ENCODE measurements at regions of chr3 and their contacts with region 1.

Region 1: GRCh38 chr3:66483406-66483906 is 17.4 kb downstream of the LRIG1 start:
- DNase-seq: no peak
- H3K4me3 Mint-ChIP-seq: no peak overlapping the region
- H3K27ac Mint-ChIP-seq: peak overlapping the region; percentile 46
- H3K4me1 Mint-ChIP-seq: peaks cover 82% of the 10 kb centered on the region
- H3K27me3 Mint-ChIP-seq: no peaks in the 10 kb centered on the region

Region 2: DNA sequence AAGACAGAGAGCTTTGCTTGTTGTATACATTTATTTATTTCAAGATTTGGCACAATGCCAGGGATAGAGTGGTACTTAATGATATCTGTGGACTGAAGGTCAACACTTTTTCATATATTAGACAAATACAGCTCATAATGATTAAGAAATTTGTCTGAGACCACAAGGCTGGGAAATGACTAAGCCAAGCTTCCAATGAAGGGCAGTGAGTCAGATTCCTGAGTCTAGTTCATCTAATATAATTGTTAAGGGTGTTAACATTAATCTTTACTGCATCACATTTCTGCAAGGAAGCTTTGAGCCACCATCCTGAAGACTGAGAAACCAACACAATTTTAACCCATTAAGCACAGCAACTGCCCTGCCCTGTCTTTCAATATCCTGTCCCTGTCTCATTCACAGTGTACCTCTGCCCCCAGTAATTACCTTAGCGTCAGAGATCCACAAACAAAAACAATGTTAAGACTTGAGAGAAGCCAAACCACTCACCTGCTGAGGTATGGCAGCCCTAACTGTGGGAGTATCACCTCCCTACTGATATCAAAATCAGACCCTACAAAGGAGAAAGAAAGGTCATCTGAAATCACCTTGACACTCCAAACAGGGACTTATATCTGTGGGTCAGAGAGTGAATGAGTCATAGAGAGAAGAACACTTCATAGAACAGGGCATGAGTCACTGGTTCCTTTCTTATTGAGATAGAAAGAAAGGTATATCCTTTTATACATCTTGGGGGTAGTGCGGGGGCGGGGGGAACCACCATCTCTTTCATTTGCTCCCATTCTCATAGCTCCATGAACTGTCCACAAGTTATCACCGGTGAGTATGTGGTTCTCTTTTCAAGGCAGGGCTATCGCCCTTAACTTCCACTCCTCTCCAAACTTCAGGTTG is 519.4 kb before region 1 on chr3:
- intact Hi-C with region 1: loop called (anchors 5 kb)
- DNase-seq: no peak
- H3K4me3 Mint-ChIP-seq: peak overlapping the region; percentile 32
- H3K27ac Mint-ChIP-seq: peak overlapping the region; percentile 96
- H3K4me1 Mint-ChIP-seq: peaks cover 33% of the 10 kb centered on the region
- H3K27me3 Mint-ChIP-seq: no peaks in the 10 kb centered on the region

Region 3: GRCh38 chr3:66038726-66039589 is 444.5 kb before region 1 on chr3 and contains the start of gene MAGI1:
- intact Hi-C with region 1: loop called (anchors 5 kb)
- DNase-seq: peak; percentile 46
- H3K4me3 Mint-ChIP-seq: peak within 1 kb of the TSS; percentile 92
- H3K27ac Mint-ChIP-seq: peak within 1 kb of the TSS; percentile 89
- H3K4me1 Mint-ChIP-seq: peaks cover 10% of the 10 kb centered on the region
- H3K27me3 Mint-ChIP-seq: peaks cover 59% of the 10 kb centered on the region
- total RNA-seq, gene MAGI1: 10.8 and 11.0 TPM in 2 replicates

Region 4: GRCh38 chr3:66220602-66221377 is 262.7 kb before region 1 on chr3 and contains the start of gene SLC25A26:
- intact Hi-C with region 1: loop called (anchors 5 kb)
- DNase-seq: peak; percentile 96
- H3K4me3 Mint-ChIP-seq: peak within 1 kb of the TSS; percentile 93
- H3K27ac Mint-ChIP-seq: peak within 1 kb of the TSS; percentile 93
- H3K4me1 Mint-ChIP-seq: peaks cover 28% of the 10 kb centered on the region
- H3K27me3 Mint-ChIP-seq: no peaks in the 10 kb centered on the region
- total RNA-seq, gene SLC25A26: 15.5 and 16.9 TPM in 2 replicates

Region 5: GRCh38 chr3:66472313-66473134 is 10.9 kb before region 1 on chr3:
- intact Hi-C with region 1: loop called (anchors 1 kb)
- DNase-seq: peak; percentile 41
- H3K4me3 Mint-ChIP-seq: peak overlapping the region; percentile 67
- H3K27ac Mint-ChIP-seq: no peak overlapping the region
- H3K4me1 Mint-ChIP-seq: peaks cover 66% of the 10 kb centered on the region
- H3K27me3 Mint-ChIP-seq: no peaks in the 10 kb centered on the region

Region 6: DNA sequence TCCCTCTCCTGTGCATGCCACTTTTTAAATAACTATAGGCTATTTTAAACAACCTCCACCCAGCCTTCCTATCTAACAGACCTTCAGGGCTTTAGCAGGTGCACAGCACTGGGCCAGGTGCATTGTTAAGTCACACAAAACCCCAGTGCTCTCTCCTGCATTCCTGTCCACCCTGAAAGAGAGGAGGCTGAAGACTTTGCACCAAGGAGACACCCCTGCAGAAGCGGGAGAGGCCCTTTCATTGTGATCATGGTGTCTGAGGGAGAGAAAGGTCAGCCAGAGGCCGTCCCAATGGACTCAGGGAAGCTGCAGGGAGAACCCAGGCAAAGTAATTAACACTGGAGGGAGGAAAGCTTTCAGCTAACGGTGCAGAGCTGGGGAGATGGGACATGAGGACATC is 12.2 kb after region 1 on chr3:
- intact Hi-C with region 1: loop called (anchors 1 kb)
- DNase-seq: no peak
- H3K4me3 Mint-ChIP-seq: peak overlapping the region; percentile 55
- H3K27ac Mint-ChIP-seq: peak overlapping the region; percentile 77
- H3K4me1 Mint-ChIP-seq: peaks cover 80% of the 10 kb centered on the region
- H3K27me3 Mint-ChIP-seq: no peaks in the 10 kb centered on the region

Region 7: DNA sequence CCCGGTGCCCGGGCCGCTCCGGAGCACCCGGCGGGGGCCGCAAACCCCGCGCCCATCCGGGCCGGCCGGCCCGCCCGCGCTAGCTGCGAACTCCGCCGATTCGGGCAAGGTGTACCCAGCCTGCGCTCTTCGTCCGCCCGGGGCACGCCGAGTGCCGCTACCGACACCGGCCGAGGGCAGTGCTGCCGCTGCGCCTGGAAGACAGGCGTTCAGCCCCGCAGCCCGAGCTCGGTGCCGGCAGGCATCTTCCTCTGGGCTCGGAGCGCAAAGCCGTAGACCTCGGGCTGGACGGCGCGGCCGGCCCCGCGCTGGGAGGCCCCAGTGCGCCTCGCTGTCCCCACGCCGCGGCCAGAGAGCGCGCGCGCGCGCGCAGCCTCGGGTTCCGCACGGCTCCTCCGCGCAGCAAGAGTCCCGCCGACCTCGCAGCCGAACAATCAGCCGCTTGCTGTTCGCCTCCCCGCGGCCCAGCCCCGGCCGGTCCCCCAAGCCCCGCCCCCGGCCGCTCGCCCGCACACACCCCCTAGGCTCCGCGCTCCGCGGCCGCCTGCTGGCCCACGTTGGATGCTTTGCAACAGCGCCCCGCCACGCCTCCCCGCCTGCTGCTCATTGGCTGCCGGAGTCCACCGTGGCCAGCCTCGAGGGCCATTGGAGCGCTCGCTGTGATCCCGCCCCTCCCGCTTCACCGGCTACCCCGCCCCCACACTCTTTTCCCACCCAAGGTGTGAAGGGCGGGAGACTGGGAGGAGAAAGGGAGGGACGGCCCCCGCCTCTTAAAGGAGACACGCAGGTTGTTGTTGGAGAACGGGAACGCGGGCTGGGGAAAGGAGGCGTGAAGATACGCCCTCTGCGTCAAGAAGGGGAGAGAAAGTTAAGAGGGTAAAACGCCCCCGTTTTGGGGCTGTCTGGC is 17.4 kb after region 1 on chr3 and contains the start of gene LRIG1:
- intact Hi-C with region 1: loop called (anchors 1 kb)
- DNase-seq: peak; percentile 98
- H3K4me3 Mint-ChIP-seq: peak within 1 kb of the TSS; percentile 96
- H3K27ac Mint-ChIP-seq: peak within 1 kb of the TSS; percentile 84
- H3K4me1 Mint-ChIP-seq: peaks cover 59% of the 10 kb centered on the region
- H3K27me3 Mint-ChIP-seq: peaks cover 27% of the 10 kb centered on the region
- total RNA-seq, gene LRIG1: 42.5 and 47.9 TPM in 2 replicates